CD8-positive, alpha-beta memory T cell (primary cell): ENCODE measurements at regions of chr11 and their contacts with region 1.

Region 1: DNA sequence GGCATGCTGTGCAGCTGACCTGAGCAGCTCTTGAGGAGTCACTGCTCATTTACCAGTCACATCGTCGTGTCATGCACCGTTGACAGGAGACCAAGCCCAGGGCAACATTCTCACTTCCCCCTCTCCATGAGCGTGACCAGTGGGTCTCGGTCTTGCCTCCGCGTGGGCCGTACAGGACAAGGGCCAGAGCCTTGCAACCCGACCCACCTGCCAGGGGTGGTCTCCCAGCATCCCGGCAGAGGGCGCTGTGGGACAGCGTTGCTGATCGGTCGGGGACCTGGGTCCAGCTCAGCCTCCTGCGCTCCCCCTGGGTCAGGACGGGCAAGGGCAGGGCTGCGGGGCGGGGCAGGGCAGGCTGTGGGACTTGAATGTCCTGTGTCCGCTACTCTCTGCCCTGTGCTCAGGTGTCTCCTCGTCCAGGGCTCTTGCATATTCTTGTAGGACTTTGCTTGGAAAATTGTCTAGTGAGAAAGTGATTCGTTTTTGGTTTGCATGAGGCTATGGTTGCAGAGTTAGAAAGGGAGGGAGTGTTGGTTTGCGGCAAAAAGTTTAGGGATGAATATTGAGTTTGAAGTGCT is 16.2 kb downstream of the EIF4G2 start:
- DNase-seq: peak; percentile 73 to 86 (median 79)
- H3K4me3 ChIP-seq: peak overlapping the region; percentile 9
- H3K4me3 Mint-ChIP-seq: peak overlapping the region in 2 of 7 donors; percentile 0 to 3
- H3K27ac ChIP-seq: no peak overlapping the region
- H3K27ac Mint-ChIP-seq: peak overlapping the region in 1 of 8 donors; percentile 76
- H3K4me1 ChIP-seq: peaks cover 21% of the 10 kb centered on the region
- H3K4me1 Mint-ChIP-seq: peaks cover 22 to 43% (median 38%) of the 10 kb centered on the region in 3 donors
- H3K27me3 ChIP-seq: no peaks in the 10 kb centered on the region
- H3K27me3 Mint-ChIP-seq: peaks cover 4 to 6% of the 10 kb centered on the region in 2 donors

Region 2: GRCh38 chr11:10716127-10716526 is 76.4 kb before region 1 on chr11:
- CTCF ChIA-PET with region 1: no interaction called
- POLR2A ChIA-PET with region 1: no interaction called
- DNase-seq: no peak
- H3K4me3 ChIP-seq: no peak overlapping the region
- H3K4me3 Mint-ChIP-seq: no peak overlapping the region
- H3K27ac ChIP-seq: no peak overlapping the region
- H3K27ac Mint-ChIP-seq: no peak overlapping the region
- H3K4me1 ChIP-seq: no peaks in the 10 kb centered on the region
- H3K4me1 Mint-ChIP-seq: no peaks in the 10 kb centered on the region
- H3K27me3 ChIP-seq: no peaks in the 10 kb centered on the region
- H3K27me3 Mint-ChIP-seq: peaks cover 9 to 10% of the 10 kb centered on the region in 2 donors

Region 3: DNA sequence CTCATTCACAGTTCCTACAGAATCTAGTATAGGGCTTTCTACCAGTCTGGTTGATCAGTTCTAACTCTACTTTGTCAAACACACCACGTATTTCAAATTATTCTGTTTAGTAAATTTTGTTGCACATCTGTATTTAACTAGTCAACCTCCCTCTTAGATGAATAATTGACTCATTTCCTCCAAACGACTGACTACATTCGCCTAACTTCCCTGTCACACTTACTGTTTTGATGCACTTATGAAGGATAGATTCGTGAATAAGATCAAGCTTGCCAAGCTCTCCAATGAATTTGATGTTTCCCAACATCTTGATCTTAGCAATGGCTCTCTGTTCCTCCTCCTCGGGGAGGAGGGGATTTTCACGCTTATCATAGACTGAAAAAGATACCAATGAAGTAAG is 11.2 kb after region 1 on chr11:
- CTCF ChIA-PET with region 1: interaction called, 42 read pairs
- POLR2A ChIA-PET with region 1: interaction called, 49 read pairs
- DNase-seq: no peak
- H3K4me3 ChIP-seq: no peak overlapping the region
- H3K4me3 Mint-ChIP-seq: peak overlapping the region in 1 of 7 donors; percentile 72
- H3K27ac ChIP-seq: no peak overlapping the region
- H3K27ac Mint-ChIP-seq: peak overlapping the region in 7 of 8 donors; percentile 6 to 93 (median 57)
- H3K4me1 ChIP-seq: peaks cover 85% of the 10 kb centered on the region
- H3K4me1 Mint-ChIP-seq: peaks cover 69 to 85% (median 84%) of the 10 kb centered on the region in 3 donors
- H3K27me3 ChIP-seq: no peaks in the 10 kb centered on the region
- H3K27me3 Mint-ChIP-seq: no peaks in the 10 kb centered on the region

Region 4: GRCh38 chr11:10906513-10906912 is 114.0 kb after region 1 on chr11:
- CTCF ChIA-PET with region 1: interaction called, 11 read pairs
- POLR2A ChIA-PET with region 1: no interaction called
- DNase-seq: no peak
- H3K4me3 ChIP-seq: no peak overlapping the region
- H3K4me3 Mint-ChIP-seq: no peak overlapping the region
- H3K27ac ChIP-seq: no peak overlapping the region
- H3K27ac Mint-ChIP-seq: no peak overlapping the region
- H3K4me1 ChIP-seq: no peaks in the 10 kb centered on the region
- H3K4me1 Mint-ChIP-seq: no peaks in the 10 kb centered on the region
- H3K27me3 ChIP-seq: no peaks in the 10 kb centered on the region
- H3K27me3 Mint-ChIP-seq: peaks cover 21 to 28% of the 10 kb centered on the region in 2 donors

Region 5: GRCh38 chr11:11016068-11016467 is 223.6 kb after region 1 on chr11:
- CTCF ChIA-PET with region 1: interaction called, 56 read pairs
- POLR2A ChIA-PET with region 1: no interaction called
- DNase-seq: no peak
- H3K4me3 ChIP-seq: no peak overlapping the region
- H3K4me3 Mint-ChIP-seq: no peak overlapping the region
- H3K27ac ChIP-seq: no peak overlapping the region
- H3K27ac Mint-ChIP-seq: no peak overlapping the region
- H3K4me1 ChIP-seq: no peaks in the 10 kb centered on the region
- H3K4me1 Mint-ChIP-seq: no peaks in the 10 kb centered on the region
- H3K27me3 ChIP-seq: peaks cover 4% of the 10 kb centered on the region
- H3K27me3 Mint-ChIP-seq: peaks cover 1 to 11% of the 10 kb centered on the region in 2 donors

Region 6: GRCh38 chr11:11028017-11028692 is 235.7 kb after region 1 on chr11:
- CTCF ChIA-PET with region 1: interaction called, 34 read pairs
- POLR2A ChIA-PET with region 1: interaction called, 3 read pairs
- DNase-seq: peak; percentile 42 to 80 (median 60)
- H3K4me3 ChIP-seq: no peak overlapping the region
- H3K4me3 Mint-ChIP-seq: no peak overlapping the region
- H3K27ac ChIP-seq: no peak overlapping the region
- H3K27ac Mint-ChIP-seq: no peak overlapping the region
- H3K4me1 ChIP-seq: no peaks in the 10 kb centered on the region
- H3K4me1 Mint-ChIP-seq: no peaks in the 10 kb centered on the region
- H3K27me3 ChIP-seq: no peaks in the 10 kb centered on the region
- H3K27me3 Mint-ChIP-seq: peaks cover 5 to 6% of the 10 kb centered on the region in 2 donors